Natural killer cell (primary cell): ENCODE measurements at regions of chr19 and their contacts with region 1.

Region 1: GRCh38 chr19:40690693-40691420 is 406 bp upstream of the NUMBL start:
- DNase-seq: peak; percentile 74 to 92
- ATAC-seq: peak; percentile 56 to 82 (median 65)
- H3K4me3 ChIP-seq: peak overlapping the region; percentile 34
- H3K4me3 Mint-ChIP-seq: peak overlapping the region; percentile 90
- H3K27ac ChIP-seq: peak overlapping the region; percentile 39
- H3K27ac Mint-ChIP-seq: peak overlapping the region; percentile 77 to 94
- H3K4me1 ChIP-seq: peaks cover 45% of the 10 kb centered on the region
- H3K4me1 Mint-ChIP-seq: peaks cover 0 to 12% of the 10 kb centered on the region in 2 donors
- H3K27me3 ChIP-seq: no peaks in the 10 kb centered on the region
- H3K27me3 Mint-ChIP-seq: no peaks in the 10 kb centered on the region
- CTCF ChIP-seq: no peak

Region 2: DNA sequence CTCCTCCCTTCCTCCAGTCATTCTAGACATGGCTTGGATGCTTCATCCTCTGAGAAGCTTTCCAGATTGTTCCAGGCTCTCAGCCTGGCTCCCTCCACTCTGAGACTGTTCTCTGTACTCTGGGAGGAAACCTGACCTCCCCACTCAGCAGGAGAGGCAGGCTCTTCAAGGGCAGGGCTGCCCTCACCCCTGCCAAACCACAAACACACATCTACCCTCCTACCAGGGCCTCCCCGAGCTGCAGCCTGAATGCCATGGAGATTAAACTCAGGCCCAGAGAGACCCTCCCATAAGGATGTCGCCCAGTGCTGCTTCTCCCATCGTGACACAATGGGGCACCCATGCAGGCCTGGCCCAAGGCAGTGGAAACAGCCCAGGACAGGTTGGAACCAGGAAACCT is 16.6 kb before region 1 on chr19:
- intact Hi-C with region 1: loop called (anchors 1 kb)
- DNase-seq: no peak
- ATAC-seq: peak in 2 of 3 donors; percentile 46 to 64
- H3K4me3 ChIP-seq: no peak overlapping the region
- H3K4me3 Mint-ChIP-seq: no peak overlapping the region
- H3K27ac ChIP-seq: peak overlapping the region; percentile 47
- H3K27ac Mint-ChIP-seq: no peak overlapping the region
- H3K4me1 ChIP-seq: peaks cover 26% of the 10 kb centered on the region
- H3K4me1 Mint-ChIP-seq: no peaks in the 10 kb centered on the region
- H3K27me3 ChIP-seq: no peaks in the 10 kb centered on the region
- H3K27me3 Mint-ChIP-seq: no peaks in the 10 kb centered on the region
- CTCF ChIP-seq: no peak

Region 3: DNA sequence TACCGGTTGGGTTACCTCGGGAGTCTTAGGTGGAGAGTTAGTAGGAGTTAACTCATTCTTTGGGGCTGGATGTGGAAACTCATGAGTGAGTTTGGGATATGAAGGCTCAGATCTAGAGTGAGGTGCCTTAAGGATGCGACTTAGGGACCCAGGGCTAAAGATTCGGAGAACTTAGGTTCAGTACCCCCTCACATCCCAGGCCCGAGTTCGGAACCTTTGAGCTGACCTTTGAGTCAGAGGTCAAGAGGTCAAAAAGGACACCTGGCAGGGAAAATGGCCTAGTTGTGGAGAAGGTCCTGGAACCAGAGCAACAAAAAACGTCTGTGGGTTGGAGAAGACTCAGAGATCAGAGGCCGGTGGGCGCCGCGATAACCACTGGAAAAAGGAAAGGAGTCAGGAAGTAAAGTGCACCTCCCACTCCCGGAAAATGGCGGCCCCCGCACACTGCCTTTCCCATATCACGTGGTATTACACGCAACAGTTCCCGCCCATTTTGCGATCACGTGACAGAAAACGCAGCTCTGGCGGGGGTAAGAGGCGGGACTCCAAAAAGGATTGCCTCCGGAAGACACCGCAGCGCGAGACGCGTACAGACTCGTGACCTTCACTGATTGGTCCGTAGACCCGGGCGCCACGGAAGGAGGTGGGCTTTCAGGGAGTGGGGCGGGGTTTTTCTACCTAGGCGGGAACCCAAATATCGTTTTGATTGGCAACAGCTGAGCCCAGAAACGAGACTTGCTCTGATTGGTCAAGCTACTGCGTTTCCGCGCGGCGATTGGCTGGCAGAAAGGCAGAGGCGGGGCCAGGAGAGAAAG is 59.4 kb after region 1 on chr19 and contains the start of gene ACTMAP:
- intact Hi-C with region 1: loop called (anchors 2 kb)
- DNase-seq: peak; percentile 100
- ATAC-seq: peak; percentile 87 to 96 (median 88)
- H3K4me3 ChIP-seq: peak within 1 kb of the TSS; percentile 73
- H3K4me3 Mint-ChIP-seq: peak within 1 kb of the TSS; percentile 99
- H3K27ac ChIP-seq: peak within 1 kb of the TSS; percentile 92
- H3K27ac Mint-ChIP-seq: peak within 1 kb of the TSS; percentile 92 to 95
- H3K4me1 ChIP-seq: peaks cover 52% of the 10 kb centered on the region
- H3K4me1 Mint-ChIP-seq: peaks cover 43 to 53% of the 10 kb centered on the region in 2 donors
- H3K27me3 ChIP-seq: no peaks in the 10 kb centered on the region
- H3K27me3 Mint-ChIP-seq: no peaks in the 10 kb centered on the region
- CTCF ChIP-seq: no peak
- total RNA-seq, gene ACTMAP: 5.9 to 9.6 (median 8.2) TPM

Region 4: DNA sequence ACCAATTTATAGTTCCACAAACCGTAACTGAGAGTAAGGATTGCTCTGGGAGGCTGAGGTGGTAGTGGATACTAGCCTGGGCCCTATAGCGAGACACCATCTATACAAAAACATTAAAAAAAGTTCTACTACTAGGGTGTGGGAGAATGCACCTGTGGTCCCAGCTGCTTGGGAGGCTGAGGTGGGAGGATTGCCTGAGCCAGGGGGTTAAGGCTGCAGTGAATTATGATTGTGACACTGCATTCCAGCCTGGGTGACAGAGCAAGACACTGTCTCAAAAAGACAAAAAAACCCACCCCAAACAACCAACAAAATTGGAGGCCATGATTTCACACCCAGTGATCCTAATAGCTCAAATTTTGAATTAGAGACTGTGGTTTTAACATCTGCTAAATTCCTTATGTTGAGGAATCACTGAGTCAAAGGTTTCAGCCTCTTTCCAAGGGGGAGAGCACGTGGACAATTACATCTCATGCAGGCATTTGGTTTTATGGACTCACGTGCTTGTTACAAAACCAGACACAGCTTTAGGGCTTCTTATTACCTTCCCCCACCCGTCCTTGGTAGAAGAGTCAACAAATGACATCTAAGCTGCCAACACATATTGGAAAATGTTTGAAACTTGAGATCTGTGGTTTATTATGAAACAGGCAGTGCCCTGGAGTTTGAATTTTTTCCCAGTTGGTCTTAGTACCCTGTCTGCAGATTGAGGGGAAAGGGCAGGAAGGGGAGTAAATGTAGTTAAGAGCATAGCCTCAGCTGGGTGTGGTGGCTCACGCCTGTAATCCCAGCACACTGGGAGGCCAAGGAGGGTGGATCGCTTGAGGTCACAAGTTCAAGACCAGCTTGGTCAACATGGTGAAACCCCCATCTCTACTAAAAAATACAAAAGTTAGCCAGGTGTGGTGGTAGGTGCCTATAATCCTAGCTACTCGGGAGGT is 140.9 kb after region 1 on chr19:
- intact Hi-C with region 1: loop called (anchors 1 kb)
- DNase-seq: peak in 1 of 2 donors; percentile 2
- ATAC-seq: no peak
- H3K4me3 ChIP-seq: no peak overlapping the region
- H3K4me3 Mint-ChIP-seq: no peak overlapping the region
- H3K27ac ChIP-seq: no peak overlapping the region
- H3K27ac Mint-ChIP-seq: peak overlapping the region; percentile 27 to 85
- H3K4me1 ChIP-seq: peaks cover 16% of the 10 kb centered on the region
- H3K4me1 Mint-ChIP-seq: peaks cover 19 to 32% of the 10 kb centered on the region in 2 donors
- H3K27me3 ChIP-seq: no peaks in the 10 kb centered on the region
- H3K27me3 Mint-ChIP-seq: no peaks in the 10 kb centered on the region
- CTCF ChIP-seq: no peak

Region 5: GRCh38 chr19:41327576-41328156 is 636.8 kb after region 1 on chr19:
- intact Hi-C with region 1: loop called (anchors 5 kb)
- DNase-seq: peak; percentile 89 to 96
- ATAC-seq: peak; percentile 46 to 78 (median 61)
- H3K4me3 ChIP-seq: peak overlapping the region; percentile 25
- H3K4me3 Mint-ChIP-seq: peak overlapping the region; percentile 80
- H3K27ac ChIP-seq: peak overlapping the region; percentile 91
- H3K27ac Mint-ChIP-seq: peak overlapping the region; percentile 94 to 97
- H3K4me1 ChIP-seq: peaks cover 98% of the 10 kb centered on the region
- H3K4me1 Mint-ChIP-seq: peaks cover 83 to 88% of the 10 kb centered on the region in 2 donors
- H3K27me3 ChIP-seq: no peaks in the 10 kb centered on the region
- H3K27me3 Mint-ChIP-seq: no peaks in the 10 kb centered on the region
- CTCF ChIP-seq: no peak